HCT116 (cell line): ENCODE measurements at regions of chr6 and their contacts with region 1.

Region 1: DNA sequence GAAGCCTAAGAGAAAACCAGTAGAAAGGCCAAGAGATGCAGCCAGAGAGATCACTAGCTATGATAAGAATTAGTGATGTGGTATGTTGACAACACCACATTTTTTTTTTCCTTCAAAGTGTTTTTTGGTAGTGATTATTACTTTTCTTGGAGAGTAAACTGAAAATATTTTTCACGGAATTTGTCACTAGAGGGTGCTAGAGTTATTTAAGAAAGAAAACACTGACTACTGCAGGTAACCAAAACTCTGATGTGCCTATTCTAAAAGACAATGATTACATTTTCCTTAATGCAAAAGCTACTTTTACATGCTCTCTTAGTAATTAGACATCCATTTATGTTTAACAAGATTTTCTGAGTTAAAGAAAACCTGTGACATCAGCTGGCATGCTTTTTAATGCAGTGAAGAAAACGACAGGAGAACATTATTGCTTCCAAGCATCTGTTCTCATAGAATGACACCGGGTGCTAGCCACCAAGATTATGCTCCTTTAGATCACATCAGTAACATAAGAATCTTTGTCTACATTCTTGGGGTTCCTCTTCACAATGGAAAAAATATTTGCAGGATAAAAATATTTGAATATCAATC is 28.8 kb downstream of the RWDD2A start:
- DNase-seq: peak; percentile 18
- ATAC-seq: no peak
- H3K4me3 ChIP-seq: no peak overlapping the region
- H3K27ac ChIP-seq: no peak overlapping the region
- H3K4me1 ChIP-seq: peaks cover 0 to 6% of the 10 kb centered on the region in 2 experiments; a peak in 1 of 4 replicates
- H3K27me3 ChIP-seq: no peaks in the 10 kb centered on the region
- CTCF ChIP-seq: peak; percentile 30 to 67 (median 51); a peak in 5 of 6 replicates
- POLR2A ChIP-seq: no peak
- RAD21 ChIP-seq: peak; percentile 76

Region 2: GRCh38 chr6:83417880-83418663 is 196.1 kb after region 1 on chr6:
- CTCF ChIA-PET with region 1: no interaction called
- POLR2A ChIA-PET with region 1: no interaction called
- RAD21 ChIA-PET with region 1: no interaction called
- intact Hi-C with region 1: loop called (anchors 5 kb)
- DNase-seq: peak; percentile 35
- ATAC-seq: peak; percentile 69
- H3K4me3 ChIP-seq: no peak overlapping the region
- H3K27ac ChIP-seq: no peak overlapping the region
- H3K4me1 ChIP-seq: no peaks in the 10 kb centered on the region
- H3K27me3 ChIP-seq: no peaks in the 10 kb centered on the region
- CTCF ChIP-seq: peak; percentile 47 to 63 (median 57); a peak in 5 of 6 replicates
- POLR2A ChIP-seq: no peak
- RAD21 ChIP-seq: peak; percentile 72